Ovary (tissue), 10 donors: ENCODE measurements at regions of chr20 and their contacts with region 1.

Region 1: GRCh38 chr20:23361598-23362384 is at the start of gene GZF1:
- DNase-seq: peak; percentile 98 to 100 (median 99)
- H3K4me3 ChIP-seq: peak within 1 kb of the TSS; percentile 69
- H3K27ac ChIP-seq: peak within 1 kb of the TSS; percentile 83 to 99
- H3K4me1 ChIP-seq: peaks cover 13% of the 10 kb centered on the region
- H3K27me3 ChIP-seq: no peaks in the 10 kb centered on the region
- CTCF ChIP-seq: peak in 2 of 3 donors; percentile 48 to 58
- EP300 ChIP-seq: peak; percentile 89
- POLR2A ChIP-seq: peak; percentile 99
- total RNA-seq, gene GZF1: 9.8 to 31.4 (median 21.4) TPM

Region 2: DNA sequence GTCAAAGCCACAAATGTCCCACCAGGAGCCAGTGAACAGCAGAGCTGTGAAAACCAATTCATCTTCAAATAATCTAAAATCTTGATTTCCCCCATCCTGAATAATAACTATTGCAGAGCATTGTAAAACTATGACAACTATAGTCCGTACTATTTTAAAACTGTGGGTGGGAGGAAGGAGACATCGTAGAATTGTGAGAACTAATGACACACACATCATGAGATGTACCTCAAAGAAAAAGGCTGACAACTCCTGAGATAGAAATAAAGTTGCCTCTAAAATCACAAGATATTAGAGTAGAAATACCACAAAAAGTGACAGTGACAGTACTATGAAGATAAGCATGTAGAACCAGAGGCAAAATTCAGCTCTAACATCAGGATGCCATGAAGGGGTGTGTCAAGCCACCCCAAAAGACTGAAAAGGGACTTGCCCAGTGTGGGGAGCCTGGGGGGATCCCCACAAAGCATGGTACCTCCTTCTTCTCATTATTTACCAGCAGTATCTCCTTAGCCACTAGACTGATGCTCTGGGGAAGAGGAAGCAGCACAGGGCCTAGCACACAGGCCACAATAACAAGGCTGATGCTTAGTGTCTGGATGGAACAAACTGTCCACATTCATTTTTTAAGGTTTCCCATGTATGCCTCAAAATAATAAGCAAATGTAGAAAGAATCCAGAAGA is 46.1 kb after region 1 on chr20:
- intact Hi-C with region 1: loop called in 2 of 4 experiments (anchors 5 to 10 kb)
- DNase-seq: no peak
- H3K4me3 ChIP-seq: no peak overlapping the region
- H3K27ac ChIP-seq: peak overlapping the region in 1 of 2 donors; percentile 45
- H3K4me1 ChIP-seq: peaks cover 17% of the 10 kb centered on the region
- H3K27me3 ChIP-seq: no peaks in the 10 kb centered on the region
- CTCF ChIP-seq: no peak
- EP300 ChIP-seq: no peak
- POLR2A ChIP-seq: no peak

Region 3: DNA sequence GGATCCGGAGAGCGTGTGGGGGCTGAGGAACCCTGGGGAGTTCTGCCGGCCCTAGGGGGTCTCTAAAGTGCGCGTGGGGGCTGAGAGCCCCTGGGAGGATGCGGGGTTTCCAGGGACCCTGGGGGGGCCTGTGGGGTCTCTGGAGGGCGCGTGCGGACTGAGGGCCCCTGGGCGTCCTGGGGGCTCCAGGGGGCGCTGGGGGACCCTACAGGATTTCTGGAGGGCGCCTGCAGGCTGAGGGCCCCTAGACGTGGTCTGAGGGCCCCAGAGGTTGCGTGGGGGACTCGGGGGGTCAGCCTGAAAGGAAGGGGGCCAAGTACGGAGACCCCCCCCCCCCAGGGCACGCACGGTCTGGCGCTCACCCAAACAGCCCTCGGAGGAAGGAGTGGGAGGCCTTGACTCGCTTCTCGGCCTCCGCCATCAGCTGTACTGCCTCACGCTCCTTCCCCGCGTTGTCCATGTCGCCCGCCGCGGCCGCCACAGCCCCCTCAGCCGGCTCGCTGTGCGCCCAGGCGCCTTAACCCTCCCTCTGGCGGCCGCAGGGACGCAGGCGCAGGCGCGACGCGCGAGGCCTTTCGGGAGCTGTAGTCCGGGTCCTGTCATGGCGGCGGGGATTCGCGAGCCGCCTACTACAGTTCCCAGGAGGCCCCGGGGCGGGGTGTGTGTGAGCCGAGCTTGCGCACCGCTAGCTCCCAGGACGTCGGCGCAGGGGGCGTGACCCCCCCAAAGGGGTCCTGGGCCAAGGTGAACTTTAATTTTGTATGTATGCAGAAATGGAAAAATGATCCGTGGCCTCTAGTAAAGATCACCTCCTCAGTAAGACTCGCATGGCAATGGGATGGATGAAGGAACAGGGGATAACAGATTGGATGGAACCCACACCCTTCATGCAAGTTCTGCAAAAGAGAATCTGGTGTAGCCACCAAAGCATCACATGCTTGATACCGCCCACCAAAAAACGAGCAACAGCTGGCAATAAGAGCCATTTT is 59.4 kb after region 1 on chr20 and contains the start of gene NAPB:
- intact Hi-C with region 1: loop called in 3 of 4 experiments (anchors 5 to 10 kb)
- DNase-seq: peak; percentile 91 to 96 (median 94)
- H3K4me3 ChIP-seq: peak within 1 kb of the TSS; percentile 99
- H3K27ac ChIP-seq: peak within 1 kb of the TSS; percentile 83 to 90
- H3K4me1 ChIP-seq: no peaks in the 10 kb centered on the region
- H3K27me3 ChIP-seq: no peaks in the 10 kb centered on the region
- CTCF ChIP-seq: peak; percentile 81 to 92 (median 83)
- EP300 ChIP-seq: no peak
- POLR2A ChIP-seq: peak; percentile 91
- total RNA-seq, gene NAPB: 11.8 to 17.9 (median 13.6) TPM

Region 4: DNA sequence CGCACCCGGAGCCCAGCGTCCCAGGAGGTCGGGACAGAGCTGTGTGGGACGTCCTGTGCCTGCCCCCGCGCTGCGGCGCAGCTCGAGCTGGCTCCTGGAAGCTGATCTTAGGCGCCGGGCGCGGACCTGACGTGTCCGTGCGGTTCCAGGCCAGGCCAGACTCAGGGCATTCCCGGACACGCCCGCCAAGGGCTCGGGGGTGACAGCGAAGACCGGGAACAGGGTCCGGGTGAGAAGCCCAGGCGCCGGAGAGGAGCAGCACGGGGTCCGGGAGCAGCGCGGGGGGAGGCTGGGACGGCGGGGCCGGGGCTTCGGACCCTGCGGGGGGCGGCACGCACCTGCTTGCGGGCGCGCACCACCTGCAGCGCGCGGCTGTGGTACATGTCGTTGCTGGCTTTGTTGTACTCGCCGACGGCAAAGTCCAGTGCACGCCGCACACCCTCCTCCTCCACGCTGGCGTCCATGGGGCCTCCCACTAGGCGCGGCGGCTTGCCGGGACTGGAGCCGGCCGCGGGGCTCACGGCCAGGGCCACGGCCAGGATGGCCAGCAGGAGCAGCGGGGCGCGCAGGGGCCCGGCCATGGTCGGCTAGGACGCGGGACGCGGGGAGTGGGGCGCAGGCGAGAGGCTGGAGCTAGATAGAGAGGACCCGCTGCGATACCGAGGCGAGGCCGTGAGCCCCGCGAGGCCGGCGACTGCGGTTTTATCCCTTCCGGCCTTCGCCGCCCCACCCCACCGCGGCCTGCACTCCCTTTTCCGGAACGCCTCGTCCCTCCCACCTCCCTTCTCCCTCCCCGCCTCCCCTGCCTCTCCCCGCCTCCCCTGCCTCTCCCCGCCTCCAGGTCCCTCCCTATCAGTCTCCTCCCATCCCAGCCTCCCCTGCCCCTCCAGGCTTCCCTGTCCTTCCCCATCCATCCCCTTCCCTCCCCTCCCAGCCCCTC is 275.8 kb after region 1 on chr20 and contains the start of gene CST3:
- intact Hi-C with region 1: loop called in 2 of 4 experiments (anchors 10 kb)
- DNase-seq: peak; percentile 88 to 94 (median 93)
- H3K4me3 ChIP-seq: peak within 1 kb of the TSS; percentile 97
- H3K27ac ChIP-seq: peak within 1 kb of the TSS; percentile 26 to 77
- H3K4me1 ChIP-seq: peaks cover 22% of the 10 kb centered on the region
- H3K27me3 ChIP-seq: no peaks in the 10 kb centered on the region
- CTCF ChIP-seq: no peak
- EP300 ChIP-seq: no peak
- POLR2A ChIP-seq: peak; percentile 87
- total RNA-seq, gene CST3: 317 to 889 (median 588) TPM

Region 5: GRCh38 chr20:23710771-23711170 is 349.0 kb after region 1 on chr20:
- intact Hi-C with region 1: no loop called
- DNase-seq: no peak
- H3K4me3 ChIP-seq: no peak overlapping the region
- H3K27ac ChIP-seq: no peak overlapping the region
- H3K4me1 ChIP-seq: no peaks in the 10 kb centered on the region
- H3K27me3 ChIP-seq: no peaks in the 10 kb centered on the region
- CTCF ChIP-seq: no peak
- EP300 ChIP-seq: no peak
- POLR2A ChIP-seq: no peak